ENCODE measurements at regions of chr6 and their contacts with region 1.

Region 1: GRCh38 chr6:107964671-107965340 is 6.8 kb upstream of the SEC63 start:
- DNase-seq: peak; percentile 61 to 71
- H3K4me3 ChIP-seq: no peak overlapping the region
- H3K27ac ChIP-seq: no peak overlapping the region
- H3K4me1 ChIP-seq: peaks cover 17% of the 10 kb centered on the region
- H3K27me3 ChIP-seq: no peaks in the 10 kb centered on the region
- CTCF ChIP-seq: no peak

Region 2: DNA sequence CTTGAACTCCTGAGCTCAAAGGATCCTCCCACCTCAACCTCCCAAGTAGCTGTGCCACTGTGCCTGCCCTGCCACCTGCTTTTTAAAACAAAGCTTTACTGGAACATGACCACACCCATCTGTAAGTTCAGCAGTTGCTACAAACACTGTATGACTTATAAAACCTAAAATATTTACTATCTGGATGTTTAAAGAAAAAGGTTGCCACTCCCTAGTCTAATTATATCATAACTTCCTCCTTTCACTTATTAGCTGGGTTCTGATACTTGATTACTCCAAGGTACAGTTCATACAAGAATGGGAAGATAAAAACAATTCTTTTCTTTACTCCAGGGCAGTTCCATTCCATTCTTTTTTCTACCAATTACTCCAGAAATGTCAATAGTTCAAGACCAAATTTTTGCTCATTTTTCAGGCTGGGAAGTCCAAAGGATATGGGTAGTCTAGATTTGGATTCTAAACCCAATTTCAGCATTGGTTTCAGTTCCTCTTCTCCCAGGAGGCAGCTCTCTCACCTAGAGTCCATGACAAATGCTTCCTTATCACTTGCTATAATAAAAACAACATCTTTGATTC is 69.9 kb before region 1 on chr6:
- CTCF ChIA-PET with region 1: no interaction called
- POLR2A ChIA-PET with region 1: interaction called, 12 read pairs
- intact Hi-C with region 1: no loop called
- DNase-seq: peak; percentile 37 to 79
- H3K4me3 ChIP-seq: no peak overlapping the region
- H3K27ac ChIP-seq: peak overlapping the region; percentile 68
- H3K4me1 ChIP-seq: peaks cover 17% of the 10 kb centered on the region
- H3K27me3 ChIP-seq: no peaks in the 10 kb centered on the region
- CTCF ChIP-seq: no peak

Region 3: GRCh38 chr6:109079981-109080380 is 1115.2 kb after region 1 on chr6:
- CTCF ChIA-PET with region 1: no interaction called
- POLR2A ChIA-PET with region 1: no interaction called
- intact Hi-C with region 1: loop called (anchors 5 kb)
- DNase-seq: no peak
- H3K4me3 ChIP-seq: no peak overlapping the region
- H3K27ac ChIP-seq: no peak overlapping the region
- H3K4me1 ChIP-seq: no peaks in the 10 kb centered on the region
- H3K27me3 ChIP-seq: no peaks in the 10 kb centered on the region
- CTCF ChIP-seq: no peak

Measured in PC-9 (cell line).